Right ventricle myocardium inferior (tissue), 1 donor: ENCODE measurements at regions of chr13 and their contacts with region 1.

Region 1: GRCh38 chr13:102197193-102197592 is 204.7 kb downstream of the FGF14 start:
- DNase-seq: no peak
- ATAC-seq: no peak

Region 2: DNA sequence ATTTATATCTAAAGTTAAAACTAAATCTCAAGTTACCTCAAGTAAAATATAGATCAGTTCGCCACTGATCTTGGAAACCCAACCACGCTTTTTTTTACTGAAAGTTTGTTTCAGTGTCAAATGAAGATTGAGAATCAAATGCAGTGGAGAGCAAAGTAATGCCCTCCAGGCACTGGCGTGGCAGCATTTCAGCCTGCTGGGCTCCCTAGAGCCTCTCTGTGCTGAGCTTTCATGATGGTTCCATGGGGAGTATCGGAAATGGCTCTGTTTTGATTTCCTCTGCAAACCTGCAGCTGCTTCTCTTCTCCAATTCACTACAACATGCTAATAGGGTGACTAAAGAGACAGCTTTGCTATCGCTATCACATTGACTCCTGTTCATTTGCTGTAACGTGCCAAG is 63.1 kb after region 1 on chr13:
- intact Hi-C with region 1: no loop called
- DNase-seq: no peak
- ATAC-seq: no peak

Region 3: DNA sequence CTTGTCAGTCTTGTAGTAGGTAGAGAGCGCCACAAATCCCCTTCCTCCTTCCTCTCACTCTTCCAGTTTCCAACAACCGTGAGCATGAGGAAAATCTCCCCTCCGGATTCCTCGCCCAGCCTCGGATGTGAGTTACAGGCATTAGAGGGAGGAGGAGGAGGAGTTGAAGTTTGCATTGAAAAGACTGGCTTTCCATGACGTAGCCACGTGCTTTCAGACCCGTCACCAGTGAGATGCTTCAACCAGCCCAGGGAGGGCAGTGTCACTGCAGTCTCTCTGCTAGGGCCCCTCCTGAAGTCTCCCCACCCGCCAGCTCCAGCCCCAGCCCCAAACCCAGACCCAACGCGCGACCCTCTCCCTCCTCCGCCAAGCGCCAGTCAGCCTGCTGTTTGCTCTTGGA is 205.1 kb after region 1 on chr13:
- intact Hi-C with region 1: loop called (anchors 5 kb)
- DNase-seq: no peak
- ATAC-seq: peak; percentile 61

Region 4: GRCh38 chr13:102460801-102461200 is 263.6 kb after region 1 on chr13:
- intact Hi-C with region 1: loop called (anchors 5 kb)
- DNase-seq: no peak
- ATAC-seq: no peak